PC-9 (cell line): ENCODE measurements at regions of chr17 and their contacts with region 1.

Region 1: GRCh38 chr17:64174686-64175456 is 44.9 kb upstream of the ERN1 start:
- DNase-seq: no peak
- H3K4me3 ChIP-seq: no peak overlapping the region
- H3K27ac ChIP-seq: no peak overlapping the region
- H3K4me1 ChIP-seq: no peaks in the 10 kb centered on the region
- H3K27me3 ChIP-seq: no peaks in the 10 kb centered on the region
- CTCF ChIP-seq: no peak

Region 2: GRCh38 chr17:64051153-64051552 is 123.7 kb before region 1 on chr17:
- CTCF ChIA-PET with region 1: no interaction called
- POLR2A ChIA-PET with region 1: no interaction called
- intact Hi-C with region 1: no loop called
- DNase-seq: no peak
- H3K4me3 ChIP-seq: no peak overlapping the region
- H3K27ac ChIP-seq: no peak overlapping the region
- H3K4me1 ChIP-seq: peaks cover 9% of the 10 kb centered on the region
- H3K27me3 ChIP-seq: no peaks in the 10 kb centered on the region
- CTCF ChIP-seq: no peak

Region 3: GRCh38 chr17:64158831-64159590 is 15.9 kb before region 1 on chr17:
- CTCF ChIA-PET with region 1: no interaction called
- POLR2A ChIA-PET with region 1: interaction called, 15 read pairs
- intact Hi-C with region 1: no loop called
- DNase-seq: peak; percentile 52 to 57
- H3K4me3 ChIP-seq: no peak overlapping the region
- H3K27ac ChIP-seq: no peak overlapping the region
- H3K4me1 ChIP-seq: peaks cover 12% of the 10 kb centered on the region
- H3K27me3 ChIP-seq: no peaks in the 10 kb centered on the region
- CTCF ChIP-seq: no peak